ENCODE measurements at regions of chr19 and their contacts with region 1.

Region 1: GRCh38 chr19:10644260-10645007 is 9.7 kb upstream of the ILF3 start:
- DNase-seq: peak; percentile 87
- ATAC-seq: peak; percentile 79
- H3K4me3 ChIP-seq: no peak overlapping the region
- H3K4me3 Mint-ChIP-seq: no peak overlapping the region
- H3K27ac ChIP-seq: peak overlapping the region; percentile 30 to 69
- H3K27ac Mint-ChIP-seq: peak overlapping the region; percentile 86
- H3K4me1 ChIP-seq: peaks cover 7 to 16% of the 10 kb centered on the region in 2 donors
- H3K4me1 Mint-ChIP-seq: peaks cover 26% of the 10 kb centered on the region
- H3K27me3 ChIP-seq: no peaks in the 10 kb centered on the region
- H3K27me3 Mint-ChIP-seq: no peaks in the 10 kb centered on the region
- CTCF ChIP-seq: peak; percentile 90

Region 2: DNA sequence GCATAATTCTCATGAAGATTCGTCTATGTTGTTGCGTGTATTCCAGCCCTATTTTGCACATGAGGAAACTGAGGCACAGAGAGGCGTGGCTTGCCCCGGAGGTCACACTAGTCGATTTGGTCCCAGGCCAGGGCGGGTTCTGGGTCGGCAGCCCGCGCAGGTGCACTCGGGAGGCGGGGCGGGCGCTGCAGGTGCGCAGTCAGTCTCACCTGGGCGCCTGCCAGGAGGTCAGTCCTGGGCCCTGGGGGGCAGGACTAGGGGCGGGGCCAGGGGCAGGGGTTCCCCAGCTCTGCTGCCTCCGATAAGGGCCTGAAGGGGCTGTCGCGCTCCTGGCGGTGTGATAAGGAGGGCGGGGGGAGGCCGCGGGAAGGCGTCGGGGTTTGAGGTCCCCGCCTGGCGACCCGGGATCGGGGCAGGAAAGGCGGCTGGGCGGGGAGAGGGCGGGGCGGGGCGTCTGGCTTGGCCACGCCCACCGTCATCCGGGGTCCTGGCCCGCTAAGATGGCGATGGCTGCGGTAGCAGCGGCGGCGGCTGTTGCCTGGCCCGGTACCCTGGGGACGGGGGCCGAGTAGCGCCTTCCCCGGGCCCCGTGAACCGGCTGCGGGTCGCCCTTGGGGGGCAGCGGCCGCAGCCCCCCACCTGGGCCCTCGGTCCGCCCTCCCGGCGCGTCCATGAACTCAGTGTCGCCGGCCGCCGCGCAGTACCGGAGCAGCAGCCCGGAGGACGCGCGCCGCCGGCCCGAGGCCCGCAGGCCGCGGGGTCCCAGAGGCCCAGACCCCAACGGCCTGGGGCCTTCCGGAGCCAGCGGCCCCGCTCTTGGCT is 100.8 kb before region 1 on chr19 and contains the start of gene ATG4D:
- CTCF ChIA-PET with region 1: interaction called, 11 read pairs
- POLR2A ChIA-PET with region 1: interaction called, 4 read pairs
- intact Hi-C with region 1: no loop called
- DNase-seq: peak; percentile 88
- ATAC-seq: peak; percentile 82
- H3K4me3 ChIP-seq: peak within 1 kb of the TSS; percentile 27 to 88 (median 75)
- H3K4me3 Mint-ChIP-seq: peak within 1 kb of the TSS; percentile 89
- H3K27ac ChIP-seq: peak within 1 kb of the TSS; percentile 34 to 85
- H3K27ac Mint-ChIP-seq: peak within 1 kb of the TSS; percentile 87
- H3K4me1 ChIP-seq: peaks cover 12 to 19% of the 10 kb centered on the region in 2 donors
- H3K4me1 Mint-ChIP-seq: peaks cover 16% of the 10 kb centered on the region
- H3K27me3 ChIP-seq: peaks cover 0 to 5% (median 0%) of the 10 kb centered on the region in 4 experiments
- H3K27me3 Mint-ChIP-seq: peaks cover 6% of the 10 kb centered on the region
- CTCF ChIP-seq: no peak
- total RNA-seq, gene ATG4D: 58.8 and 59.2 TPM in 2 replicates

Region 3: GRCh38 chr19:10593820-10594637 is 50.4 kb before region 1 on chr19:
- CTCF ChIA-PET with region 1: interaction called, 26 read pairs
- POLR2A ChIA-PET with region 1: interaction called, 4 read pairs
- intact Hi-C with region 1: no loop called
- DNase-seq: peak; percentile 56
- ATAC-seq: peak; percentile 59
- H3K4me3 ChIP-seq: no peak overlapping the region
- H3K4me3 Mint-ChIP-seq: peak overlapping the region; percentile 83
- H3K27ac ChIP-seq: peak overlapping the region in 1 of 2 donors; percentile 9
- H3K27ac Mint-ChIP-seq: peak overlapping the region; percentile 94
- H3K4me1 ChIP-seq: peaks cover 30 to 45% of the 10 kb centered on the region in 2 donors
- H3K4me1 Mint-ChIP-seq: peaks cover 30% of the 10 kb centered on the region
- H3K27me3 ChIP-seq: no peaks in the 10 kb centered on the region
- H3K27me3 Mint-ChIP-seq: no peaks in the 10 kb centered on the region
- CTCF ChIP-seq: no peak

Region 4: GRCh38 chr19:10612491-10613119 is 31.8 kb before region 1 on chr19:
- CTCF ChIA-PET with region 1: interaction called, 37 read pairs
- POLR2A ChIA-PET with region 1: interaction called, 5 read pairs
- intact Hi-C with region 1: no loop called
- DNase-seq: no peak
- ATAC-seq: no peak
- H3K4me3 ChIP-seq: no peak overlapping the region
- H3K4me3 Mint-ChIP-seq: no peak overlapping the region
- H3K27ac ChIP-seq: no peak overlapping the region
- H3K27ac Mint-ChIP-seq: peak overlapping the region; percentile 37
- H3K4me1 ChIP-seq: peaks cover 21 to 72% of the 10 kb centered on the region in 2 donors
- H3K4me1 Mint-ChIP-seq: peaks cover 48% of the 10 kb centered on the region
- H3K27me3 ChIP-seq: no peaks in the 10 kb centered on the region
- H3K27me3 Mint-ChIP-seq: no peaks in the 10 kb centered on the region
- CTCF ChIP-seq: no peak

Region 5: GRCh38 chr19:10712045-10712444 is 67.6 kb after region 1 on chr19:
- CTCF ChIA-PET with region 1: no interaction called
- POLR2A ChIA-PET with region 1: no interaction called
- intact Hi-C with region 1: no loop called
- DNase-seq: no peak
- ATAC-seq: no peak
- H3K4me3 ChIP-seq: no peak overlapping the region
- H3K4me3 Mint-ChIP-seq: no peak overlapping the region
- H3K27ac ChIP-seq: no peak overlapping the region
- H3K27ac Mint-ChIP-seq: no peak overlapping the region
- H3K4me1 ChIP-seq: peaks cover 3 to 11% of the 10 kb centered on the region in 2 donors
- H3K4me1 Mint-ChIP-seq: peaks cover 8% of the 10 kb centered on the region
- H3K27me3 ChIP-seq: no peaks in the 10 kb centered on the region
- H3K27me3 Mint-ChIP-seq: no peaks in the 10 kb centered on the region
- CTCF ChIP-seq: no peak

Region 6: GRCh38 chr19:11346092-11346940 is 701.9 kb after region 1 on chr19 and contains the starts of genes CCDC159 and TMEM205:
- CTCF ChIA-PET with region 1: interaction called, 10 read pairs
- POLR2A ChIA-PET with region 1: no interaction called
- intact Hi-C with region 1: no loop called
- DNase-seq: peak; percentile 99
- ATAC-seq: peak; percentile 97
- H3K4me3 ChIP-seq: peak within 1 kb of the TSS; percentile 67 to 97 (median 94)
- H3K4me3 Mint-ChIP-seq: peak within 1 kb of the TSS; percentile 99
- H3K27ac ChIP-seq: peak within 1 kb of the TSS; percentile 71 to 86
- H3K27ac Mint-ChIP-seq: peak within 1 kb of the TSS; percentile 96
- H3K4me1 ChIP-seq: peaks cover 11 to 20% of the 10 kb centered on the region in 2 donors
- H3K4me1 Mint-ChIP-seq: peaks cover 28% of the 10 kb centered on the region
- H3K27me3 ChIP-seq: no peaks in the 10 kb centered on the region
- H3K27me3 Mint-ChIP-seq: no peaks in the 10 kb centered on the region
- CTCF ChIP-seq: no peak
- total RNA-seq, gene CCDC159: 56.0 and 57.5 TPM in 2 replicates
- total RNA-seq, gene TMEM205: 48.5 and 53.4 TPM in 2 replicates